Prostate gland (tissue), 2 donors: ENCODE measurements at regions of chr2 and their contacts with region 1.

Region 1: DNA sequence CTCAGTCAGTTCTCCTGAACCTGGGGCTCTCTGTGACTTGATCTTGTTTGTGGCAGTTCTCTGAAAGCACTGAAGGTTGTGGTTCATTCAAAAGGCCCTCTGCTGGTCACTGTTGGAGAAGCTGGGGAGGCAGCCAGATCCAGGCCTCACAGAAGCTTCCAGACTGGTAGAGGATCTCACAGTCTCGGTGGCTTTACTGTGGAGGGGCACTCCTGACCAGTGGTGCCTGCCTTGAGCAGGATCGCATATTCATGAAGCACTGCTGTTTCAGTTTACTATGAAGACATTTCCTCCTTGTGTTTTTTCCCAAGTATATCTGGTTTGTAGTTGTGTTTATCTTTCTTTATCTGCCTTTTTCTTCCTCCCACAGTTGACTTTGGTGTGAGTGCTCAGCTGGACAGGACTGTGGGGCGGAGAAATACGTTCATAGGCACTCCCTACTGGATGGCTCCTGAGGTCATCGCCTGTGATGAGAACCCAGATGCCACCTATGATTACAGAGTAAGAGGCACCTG is 133.9 kb downstream of the MAP4K4 start:
- DNase-seq: peak; percentile 54
- H3K4me3 ChIP-seq: no peak overlapping the region
- H3K27ac ChIP-seq: peak overlapping the region; percentile 48 to 52
- H3K4me1 ChIP-seq: peaks cover 11% of the 10 kb centered on the region
- H3K27me3 ChIP-seq: no peaks in the 10 kb centered on the region
- CTCF ChIP-seq: peak; percentile 48 to 76 (median 61)
- POLR2A ChIP-seq: no peak

Region 2: GRCh38 chr2:101419096-101419663 is 412.2 kb before region 1 on chr2:
- intact Hi-C with region 1: loop called (anchors 1 kb)
- DNase-seq: peak; percentile 48
- H3K4me3 ChIP-seq: no peak overlapping the region
- H3K27ac ChIP-seq: no peak overlapping the region
- H3K4me1 ChIP-seq: no peaks in the 10 kb centered on the region
- H3K27me3 ChIP-seq: no peaks in the 10 kb centered on the region
- CTCF ChIP-seq: peak; percentile 32 to 73 (median 64)
- POLR2A ChIP-seq: no peak

Region 3: DNA sequence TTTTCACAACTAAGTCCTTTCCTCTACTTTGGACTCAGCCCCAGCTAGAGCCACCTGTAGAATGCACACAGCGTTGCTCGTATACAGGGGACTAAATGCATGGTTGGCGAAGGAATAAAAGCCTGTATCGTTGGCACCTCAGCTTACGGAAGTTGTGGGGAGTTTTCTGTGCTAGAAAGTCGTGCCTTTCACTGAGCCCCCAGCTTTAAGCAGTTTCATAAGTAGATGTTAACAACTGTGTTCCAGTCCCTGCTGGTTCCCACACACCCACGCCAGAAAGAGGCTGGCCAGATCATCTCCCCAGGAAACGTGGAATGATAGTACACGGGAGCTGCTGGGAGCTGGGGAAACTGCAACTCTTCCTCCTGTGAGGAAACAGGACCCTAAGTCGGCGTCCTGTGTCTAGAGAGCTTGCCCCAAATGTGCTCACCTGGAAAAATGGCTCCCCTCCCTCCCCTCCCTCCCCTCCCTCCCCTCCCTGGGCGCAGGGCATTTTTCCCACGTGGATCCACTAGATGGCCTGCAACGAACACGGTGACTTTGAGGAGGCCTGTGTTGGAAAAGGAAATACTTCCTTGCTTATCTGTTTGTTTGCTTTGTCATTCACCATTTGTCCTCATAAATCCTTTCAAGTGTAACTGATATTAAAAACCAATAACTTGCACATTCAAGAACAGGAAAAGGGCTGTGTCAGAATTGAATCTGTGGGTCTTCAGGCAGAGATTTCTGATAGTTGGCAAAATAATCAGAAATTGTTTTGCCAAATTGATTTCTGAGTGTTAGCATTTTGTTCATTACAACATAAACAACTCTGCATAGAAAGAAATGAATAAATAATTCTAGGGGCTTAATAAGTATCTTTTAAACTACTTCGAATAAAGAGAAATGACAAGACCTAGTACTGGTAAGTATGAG is 312.6 kb before region 1 on chr2:
- intact Hi-C with region 1: loop called (anchors 1 kb)
- DNase-seq: peak; percentile 43
- H3K4me3 ChIP-seq: no peak overlapping the region
- H3K27ac ChIP-seq: no peak overlapping the region
- H3K4me1 ChIP-seq: no peaks in the 10 kb centered on the region
- H3K27me3 ChIP-seq: no peaks in the 10 kb centered on the region
- CTCF ChIP-seq: peak; percentile 22 to 38 (median 33)
- POLR2A ChIP-seq: no peak

Region 4: DNA sequence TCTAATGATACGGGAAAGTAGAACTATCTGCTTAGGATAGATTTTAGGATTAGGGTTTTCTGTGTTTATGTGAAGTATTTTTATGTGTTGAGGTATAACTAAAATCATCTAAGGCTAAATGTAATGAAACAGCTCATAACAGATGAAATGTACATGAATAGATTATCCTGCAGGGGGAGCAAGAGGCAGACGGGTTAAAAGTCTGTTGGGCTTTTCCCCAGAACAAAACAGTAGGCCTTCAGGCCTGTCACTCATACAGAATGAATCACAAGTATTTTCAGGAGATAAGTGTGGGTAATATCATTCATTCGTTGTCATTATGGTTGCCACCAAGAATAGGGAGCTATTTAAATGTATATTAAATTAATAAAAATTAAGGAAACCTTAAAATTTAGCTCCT is 52.5 kb after region 1 on chr2:
- intact Hi-C with region 1: no loop called
- DNase-seq: peak; percentile 33
- H3K4me3 ChIP-seq: no peak overlapping the region
- H3K27ac ChIP-seq: no peak overlapping the region
- H3K4me1 ChIP-seq: peaks cover 6% of the 10 kb centered on the region
- H3K27me3 ChIP-seq: no peaks in the 10 kb centered on the region
- CTCF ChIP-seq: peak; percentile 12 to 66 (median 54)
- POLR2A ChIP-seq: no peak